AG04449 (cell line): ENCODE measurements at regions of chr2 and their contacts with region 1.

Region 1: GRCh38 chr2:54704688-54705605 is 18.5 kb upstream of the EML6 start:
- DNase-seq: no peak
- H3K4me3 ChIP-seq: no peak overlapping the region
- CTCF ChIP-seq: peak; percentile 12

Region 2: GRCh38 chr2:54115284-54116137 is 589.4 kb before region 1 on chr2 and contains the start of gene ACYP2:
- CTCF ChIA-PET with region 1: interaction called, 13 read pairs
- POLR2A ChIA-PET with region 1: no interaction called
- DNase-seq: peak; percentile 72
- H3K4me3 ChIP-seq: peak within 1 kb of the TSS; percentile 81
- CTCF ChIP-seq: peak; percentile 23

Region 3: GRCh38 chr2:54176577-54176976 is 528.4 kb before region 1 on chr2:
- CTCF ChIA-PET with region 1: interaction called, 43 read pairs
- POLR2A ChIA-PET with region 1: no interaction called
- DNase-seq: no peak
- H3K4me3 ChIP-seq: no peak overlapping the region
- CTCF ChIP-seq: peak; percentile 66

Region 4: DNA sequence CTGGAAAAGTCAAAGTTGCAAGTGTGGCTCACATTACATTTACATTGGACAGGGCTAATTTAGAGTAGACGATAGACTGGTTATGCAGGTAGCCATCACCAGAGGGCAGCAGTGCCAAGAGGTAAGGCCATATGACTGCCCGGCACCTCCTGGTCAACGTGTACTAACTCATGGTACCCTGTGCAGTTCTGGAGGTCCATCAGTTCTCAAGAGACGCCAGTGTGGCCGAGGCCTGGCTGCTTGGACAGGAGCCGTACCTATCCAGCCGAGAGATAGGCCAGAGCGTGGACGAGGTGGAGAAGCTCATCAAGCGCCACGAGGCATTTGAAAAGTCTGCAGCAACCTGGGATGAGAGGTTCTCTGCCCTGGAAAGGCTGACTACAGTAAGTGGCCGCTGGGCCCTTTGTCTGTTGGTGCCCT is 47.3 kb before region 1 on chr2:
- CTCF ChIA-PET with region 1: interaction called, 26 read pairs
- POLR2A ChIA-PET with region 1: no interaction called
- DNase-seq: no peak
- H3K4me3 ChIP-seq: no peak overlapping the region
- CTCF ChIP-seq: peak; percentile 55

Region 5: GRCh38 chr2:54691445-54692135 is 13.4 kb before region 1 on chr2:
- CTCF ChIA-PET with region 1: interaction called, 18 read pairs
- POLR2A ChIA-PET with region 1: no interaction called
- DNase-seq: no peak
- H3K4me3 ChIP-seq: no peak overlapping the region
- CTCF ChIP-seq: no peak

Region 6: GRCh38 chr2:54723131-54723995 is 18.4 kb after region 1 on chr2 and contains the start of gene EML6:
- CTCF ChIA-PET with region 1: interaction called, 11 read pairs
- POLR2A ChIA-PET with region 1: no interaction called
- DNase-seq: peak; percentile 84
- H3K4me3 ChIP-seq: peak within 1 kb of the TSS; percentile 83
- CTCF ChIP-seq: peak; percentile 19